Head of caudate nucleus (tissue), 42 donors: ENCODE measurements at regions of chr3 and their contacts with region 1.

Region 1: DNA sequence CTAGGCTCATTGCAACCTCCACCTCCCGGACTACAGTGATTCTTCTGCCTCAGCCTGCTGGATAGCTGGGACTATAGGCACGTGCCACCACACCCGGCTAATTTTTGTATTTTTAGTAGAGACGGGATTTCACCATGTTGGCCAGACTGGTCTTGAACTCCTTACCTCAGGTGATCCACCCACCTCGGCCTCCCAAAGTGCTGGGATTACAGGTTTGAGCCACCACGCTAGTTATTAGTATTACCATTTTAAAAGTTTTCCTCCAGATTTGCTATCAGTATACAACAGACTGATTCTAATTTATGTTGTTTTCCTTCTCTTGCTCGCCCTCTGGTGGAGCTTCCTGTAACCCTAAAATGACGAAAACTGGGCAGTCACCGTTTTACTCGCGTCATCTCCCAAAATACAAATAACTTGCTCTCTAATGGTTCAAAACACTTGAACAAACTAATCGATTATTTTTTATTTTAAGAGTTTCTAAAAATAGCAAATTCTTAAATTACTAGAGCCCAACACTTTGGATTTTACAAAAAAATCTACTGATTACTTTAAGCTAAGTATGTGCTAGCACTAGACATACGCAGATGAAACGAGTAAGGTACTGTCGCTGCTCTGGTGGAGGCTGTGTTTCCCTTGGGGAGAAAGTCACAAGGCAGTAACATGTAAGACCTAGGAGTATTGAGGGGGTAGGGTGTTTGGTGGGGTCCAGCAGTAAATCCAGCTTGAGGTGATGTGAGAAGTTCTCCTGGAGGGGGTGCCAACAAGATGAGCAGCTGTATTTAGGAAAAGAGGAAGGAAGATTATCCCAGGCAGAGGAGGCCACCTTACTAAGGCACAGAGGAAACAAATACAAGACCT is 203.3 kb downstream of the MBNL1 start:
- DNase-seq: peak in 39 of 42 donors; percentile 19 to 88 (median 65)

Region 2: GRCh38 chr3:152298393-152299242 is 173.4 kb before region 1 on chr3:
- intact Hi-C with region 1: no loop called
- DNase-seq: peak in 35 of 42 donors; percentile 16 to 84 (median 53)

Region 3: GRCh38 chr3:152524198-152525140 is 52.4 kb after region 1 on chr3:
- intact Hi-C with region 1: loop called (anchors 5 kb)
- DNase-seq: peak in 26 of 42 donors; percentile 3 to 86 (median 49)

Region 4: DNA sequence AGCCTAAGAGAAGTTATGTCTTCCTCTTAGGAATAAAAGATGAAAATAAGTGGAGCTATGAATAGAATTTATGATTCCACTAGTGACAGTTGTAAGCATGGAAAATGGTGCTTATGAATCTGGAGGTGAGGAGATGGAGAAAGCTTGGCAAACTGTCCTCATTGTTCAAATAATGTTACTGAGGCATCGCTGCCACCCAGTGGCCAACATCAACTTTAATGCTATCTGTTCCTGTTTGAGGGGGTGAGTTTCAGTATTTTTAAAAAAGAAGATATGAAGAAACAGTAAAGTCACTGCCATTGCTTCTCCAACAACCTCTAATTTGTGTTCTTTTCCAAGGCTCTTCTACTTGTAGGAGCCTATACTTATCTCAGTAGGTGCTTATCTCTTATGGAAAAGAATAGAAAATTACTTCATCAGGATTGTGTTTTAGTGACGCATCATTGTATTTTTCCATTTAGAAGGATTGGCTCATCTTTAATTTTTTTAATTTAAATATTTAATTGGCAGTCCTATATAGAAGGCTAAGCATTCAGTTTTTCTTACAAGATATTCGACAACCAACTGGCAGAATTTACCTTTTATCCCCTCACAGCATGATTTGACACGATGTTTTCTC is 102.5 kb after region 1 on chr3:
- intact Hi-C with region 1: loop called (anchors 10 kb)
- DNase-seq: peak; percentile 12 to 84 (median 67)